PC-3 (cell line): ENCODE measurements at regions of chr7 and their contacts with region 1.

Region 1: GRCh38 chr7:28685644-28686417 is 272.3 kb downstream of the TRIL start:
- DNase-seq: peak; percentile 97
- ATAC-seq: peak; percentile 89
- H3K4me3 ChIP-seq: peak overlapping the region; percentile 77
- H3K27ac ChIP-seq: peak overlapping the region; percentile 78
- H3K4me1 ChIP-seq: peaks cover 31% of the 10 kb centered on the region
- H3K27me3 ChIP-seq: no peaks in the 10 kb centered on the region
- CTCF ChIP-seq: no peak

Region 2: DNA sequence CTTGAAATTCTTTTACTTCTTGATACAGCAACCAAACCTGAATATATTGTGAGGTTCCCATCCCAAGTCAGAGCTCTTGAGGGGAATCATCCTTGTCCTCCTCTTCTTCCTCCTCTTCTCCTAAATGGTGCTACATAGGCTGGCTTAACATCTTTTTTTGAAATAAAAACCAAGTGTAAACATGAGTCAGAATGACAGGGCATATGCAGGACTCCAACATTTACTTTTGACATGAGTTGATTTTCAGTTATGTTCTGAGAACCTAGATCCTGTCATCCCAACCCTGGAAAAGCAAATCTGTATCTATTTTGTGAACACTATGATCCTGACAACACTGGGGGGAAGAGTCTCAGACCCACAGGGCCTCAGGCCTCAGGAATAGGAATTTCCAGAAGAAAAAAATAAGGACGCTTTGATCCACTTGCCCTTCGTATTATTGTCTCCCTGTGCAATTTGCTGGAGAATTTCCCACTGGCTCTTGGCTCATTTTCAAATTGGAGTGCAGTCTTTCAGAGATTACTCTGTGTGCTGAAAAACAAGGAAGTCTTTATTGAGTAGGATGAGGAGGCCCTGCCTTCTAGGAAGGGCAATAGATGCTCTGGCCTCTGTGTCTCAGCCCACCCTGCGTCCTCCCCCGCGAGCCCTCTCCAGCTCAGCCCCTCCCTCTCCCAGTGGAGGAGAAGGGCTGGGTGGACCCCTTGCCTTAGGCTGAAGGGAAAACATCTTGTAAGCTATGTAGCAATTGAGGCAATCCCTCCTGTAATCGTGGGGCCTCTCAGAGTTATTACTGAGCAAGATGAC is 151.9 kb before region 1 on chr7:
- CTCF ChIA-PET with region 1: no interaction called
- POLR2A ChIA-PET with region 1: interaction called, 9 read pairs
- intact Hi-C with region 1: loop called (anchors 5 kb)
- DNase-seq: peak; percentile 79
- ATAC-seq: peak; percentile 89
- H3K4me3 ChIP-seq: peak overlapping the region; percentile 28; the same call in 1 of the 2 replicates
- H3K27ac ChIP-seq: peak overlapping the region; percentile 83
- H3K4me1 ChIP-seq: peaks cover 35% of the 10 kb centered on the region
- H3K27me3 ChIP-seq: no peaks in the 10 kb centered on the region
- CTCF ChIP-seq: no peak

Region 3: GRCh38 chr7:28666154-28666553 is 19.7 kb before region 1 on chr7:
- CTCF ChIA-PET with region 1: no interaction called
- POLR2A ChIA-PET with region 1: interaction called, 9 read pairs
- intact Hi-C with region 1: loop called (anchors 1 kb)
- DNase-seq: peak; percentile 95
- ATAC-seq: peak; percentile 96
- H3K4me3 ChIP-seq: no peak overlapping the region
- H3K27ac ChIP-seq: peak overlapping the region; percentile 76
- H3K4me1 ChIP-seq: peaks cover 28% of the 10 kb centered on the region
- H3K27me3 ChIP-seq: no peaks in the 10 kb centered on the region
- CTCF ChIP-seq: no peak

Region 4: DNA sequence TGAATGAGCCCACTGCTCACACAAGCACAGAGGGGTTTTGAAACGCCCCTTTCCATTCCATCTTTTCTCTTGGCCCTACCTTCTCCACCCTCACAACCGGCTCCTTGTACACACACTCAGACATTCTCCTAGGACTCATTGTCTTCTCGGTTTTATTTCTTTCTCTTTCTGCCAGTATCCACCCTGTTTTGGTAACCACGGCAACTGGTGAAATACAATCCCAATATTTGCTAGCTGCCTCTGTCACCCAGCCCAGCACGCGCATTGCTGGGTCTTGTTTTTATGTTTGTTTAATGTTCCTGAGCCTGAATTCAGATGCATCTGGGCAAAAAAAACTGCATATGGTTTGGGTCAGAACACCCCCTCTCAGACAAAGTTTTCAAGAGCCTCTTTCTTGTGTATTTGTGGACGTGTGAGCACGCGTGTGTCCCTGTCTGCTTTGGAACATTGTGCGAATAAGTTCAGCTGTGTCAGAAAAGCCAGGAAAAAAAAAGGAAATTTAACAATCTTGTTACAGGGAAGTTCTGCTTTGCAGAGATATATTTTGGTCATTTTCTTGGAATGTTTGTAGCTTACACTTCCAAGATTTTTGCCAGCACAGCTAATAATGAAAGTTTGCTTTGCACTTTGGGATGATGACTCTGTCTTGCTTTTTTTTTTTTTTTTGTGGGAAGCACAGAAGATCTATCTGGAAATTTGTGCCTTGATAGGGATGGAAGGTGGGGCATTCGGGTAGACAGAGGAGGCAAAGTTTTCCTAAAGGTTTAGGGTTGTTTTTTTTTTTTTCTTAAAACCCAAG is 46.4 kb after region 1 on chr7:
- CTCF ChIA-PET with region 1: no interaction called
- POLR2A ChIA-PET with region 1: interaction called, 3 read pairs
- intact Hi-C with region 1: loop called (anchors 1 kb)
- DNase-seq: peak; percentile 46
- ATAC-seq: peak; percentile 38
- H3K4me3 ChIP-seq: no peak overlapping the region
- H3K27ac ChIP-seq: no peak overlapping the region
- H3K4me1 ChIP-seq: peaks cover 38% of the 10 kb centered on the region
- H3K27me3 ChIP-seq: no peaks in the 10 kb centered on the region
- CTCF ChIP-seq: no peak

Region 5: DNA sequence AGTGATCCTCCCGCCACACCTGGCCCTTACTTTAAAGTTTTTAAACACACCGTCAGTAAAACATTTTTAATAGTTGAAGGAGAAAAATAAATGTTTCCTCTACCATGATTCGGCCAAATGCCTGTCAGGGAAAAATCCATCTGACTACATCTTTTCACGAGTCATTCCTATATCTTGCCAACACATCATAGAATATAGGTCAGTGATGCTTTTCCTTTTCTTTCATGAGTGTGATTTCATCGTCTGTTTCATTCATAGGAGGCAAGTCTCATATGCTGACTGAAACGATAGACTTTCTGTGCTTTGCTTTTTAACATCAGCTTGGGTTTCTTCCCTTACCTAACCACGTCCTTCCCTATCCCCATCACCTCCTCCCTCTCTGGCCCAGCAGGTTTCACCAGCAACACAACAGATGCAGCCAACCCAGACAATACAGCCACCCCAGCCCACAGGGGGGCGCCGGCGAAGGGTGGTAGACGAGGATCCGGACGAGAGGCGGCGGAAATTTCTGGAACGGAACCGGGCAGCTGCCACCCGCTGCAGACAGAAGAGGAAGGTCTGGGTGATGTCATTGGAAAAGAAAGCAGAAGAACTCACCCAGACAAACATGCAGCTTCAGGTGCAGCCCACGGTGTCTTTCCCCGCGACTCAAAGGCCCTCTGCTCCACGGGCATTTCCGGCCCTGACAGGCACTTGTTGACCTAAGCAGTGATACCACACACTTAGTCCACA is 123.1 kb after region 1 on chr7:
- CTCF ChIA-PET with region 1: no interaction called
- POLR2A ChIA-PET with region 1: no interaction called
- intact Hi-C with region 1: loop called (anchors 2 kb)
- DNase-seq: peak; percentile 5
- ATAC-seq: no peak
- H3K4me3 ChIP-seq: no peak overlapping the region
- H3K27ac ChIP-seq: no peak overlapping the region
- H3K4me1 ChIP-seq: peaks cover 30% of the 10 kb centered on the region
- H3K27me3 ChIP-seq: no peaks in the 10 kb centered on the region
- CTCF ChIP-seq: no peak; the same call in 1 of the 2 replicates